Activated T-helper 1 cell treated with anti-CD3 and anti-CD28 coated beads, Interleukin-12 subunit alpha, Interleukin-12 subunit beta, Interleukin-2, Interleukin-4 antibody, amounts not matched to agents 30 ng/mL and 10 ng/mL and 1 ng/mL, durations not matched to agents 14 hours and 24 hours and 36 hours (primary cell): ENCODE measurements at regions of chr4 and their contacts with region 1.

Region 1: DNA sequence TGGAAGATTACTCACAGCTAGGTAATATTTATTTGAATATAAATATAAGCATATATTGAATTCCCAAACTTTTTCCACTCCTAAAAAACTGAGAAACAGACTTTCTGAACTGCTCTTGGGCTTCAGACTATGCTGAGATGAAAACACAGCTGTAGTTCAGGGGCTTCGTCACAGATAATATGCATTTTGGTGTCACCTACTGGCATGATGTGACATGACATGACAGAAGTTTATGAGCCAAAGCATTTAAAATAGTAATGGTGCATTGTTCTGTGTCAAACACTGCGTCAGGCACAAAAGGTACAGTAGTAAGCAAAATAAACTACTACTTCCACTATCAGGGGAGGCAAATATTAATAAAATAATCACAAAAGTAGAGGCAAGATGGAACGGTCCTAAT is 171.3 kb downstream of the BTC start:
- DNase-seq: no peak
- H3K4me3 Mint-ChIP-seq: no peak overlapping the region
- H3K27ac Mint-ChIP-seq: no peak overlapping the region
- H3K4me1 Mint-ChIP-seq: peaks cover 23% of the 10 kb centered on the region
- H3K27me3 Mint-ChIP-seq: peaks cover 4% of the 10 kb centered on the region

Region 2: GRCh38 chr4:73518340-73518739 is 1104.7 kb before region 1 on chr4:
- intact Hi-C with region 1: no loop called
- DNase-seq: no peak
- H3K4me3 Mint-ChIP-seq: no peak overlapping the region
- H3K27ac Mint-ChIP-seq: no peak overlapping the region
- H3K4me1 Mint-ChIP-seq: no peaks in the 10 kb centered on the region
- H3K27me3 Mint-ChIP-seq: peaks cover 10% of the 10 kb centered on the region

Region 3: GRCh38 chr4:74320559-74321118 is 302.4 kb before region 1 on chr4:
- intact Hi-C with region 1: loop called (anchors 1 kb)
- DNase-seq: no peak
- H3K4me3 Mint-ChIP-seq: no peak overlapping the region
- H3K27ac Mint-ChIP-seq: no peak overlapping the region
- H3K4me1 Mint-ChIP-seq: no peaks in the 10 kb centered on the region
- H3K27me3 Mint-ChIP-seq: peaks cover 14% of the 10 kb centered on the region

Region 4: GRCh38 chr4:74376888-74377483 is 246.1 kb before region 1 on chr4:
- intact Hi-C with region 1: loop called (anchors 2 kb)
- DNase-seq: no peak
- H3K4me3 Mint-ChIP-seq: no peak overlapping the region
- H3K27ac Mint-ChIP-seq: no peak overlapping the region
- H3K4me1 Mint-ChIP-seq: peaks cover 5% of the 10 kb centered on the region
- H3K27me3 Mint-ChIP-seq: peaks cover 2% of the 10 kb centered on the region

Region 5: DNA sequence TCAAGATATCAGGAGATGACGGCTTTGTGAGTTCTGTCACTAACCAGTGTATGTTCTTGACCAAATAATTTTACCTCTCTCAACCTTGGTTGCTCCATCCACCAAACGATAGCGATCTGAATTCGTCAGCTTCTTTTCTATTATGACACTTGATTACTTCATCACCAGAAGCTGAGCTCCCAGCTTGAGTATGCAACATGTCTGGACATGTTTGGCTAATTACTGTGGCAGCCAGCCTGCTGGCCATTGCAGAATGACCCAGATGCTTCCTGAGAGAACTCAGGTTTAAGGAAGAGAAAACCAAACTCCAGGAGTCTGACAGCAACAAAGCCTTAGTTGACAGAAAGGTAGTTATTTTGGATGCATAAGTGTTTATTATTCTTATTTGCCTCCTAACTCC is 263.4 kb after region 1 on chr4:
- intact Hi-C with region 1: no loop called
- DNase-seq: no peak
- H3K4me3 Mint-ChIP-seq: no peak overlapping the region
- H3K27ac Mint-ChIP-seq: no peak overlapping the region
- H3K4me1 Mint-ChIP-seq: no peaks in the 10 kb centered on the region
- H3K27me3 Mint-ChIP-seq: no peaks in the 10 kb centered on the region